Natural killer cell (primary cell): ENCODE measurements at regions of chr3 and their contacts with region 1.

Region 1: GRCh38 chr3:15667484-15667883 is 65.9 kb downstream of the BTD start:
- DNase-seq: peak; percentile 34 to 77
- ATAC-seq: peak; percentile 86 to 98 (median 93)
- H3K4me3 ChIP-seq: no peak overlapping the region
- H3K4me3 Mint-ChIP-seq: peak overlapping the region; percentile 52
- H3K27ac ChIP-seq: no peak overlapping the region
- H3K27ac Mint-ChIP-seq: peak overlapping the region; percentile 69 to 75
- H3K4me1 ChIP-seq: peaks cover 6% of the 10 kb centered on the region
- H3K4me1 Mint-ChIP-seq: peaks cover 15 to 35% of the 10 kb centered on the region in 2 donors
- H3K27me3 ChIP-seq: no peaks in the 10 kb centered on the region
- H3K27me3 Mint-ChIP-seq: no peaks in the 10 kb centered on the region
- CTCF ChIP-seq: no peak

Region 2: GRCh38 chr3:15647611-15648167 is 19.8 kb before region 1 on chr3:
- intact Hi-C with region 1: no loop called
- DNase-seq: peak; percentile 51 to 78
- ATAC-seq: peak; percentile 80 to 87 (median 81)
- H3K4me3 ChIP-seq: no peak overlapping the region
- H3K4me3 Mint-ChIP-seq: peak overlapping the region; percentile 92
- H3K27ac ChIP-seq: peak overlapping the region; percentile 16
- H3K27ac Mint-ChIP-seq: peak overlapping the region; percentile 83 to 94
- H3K4me1 ChIP-seq: peaks cover 51% of the 10 kb centered on the region
- H3K4me1 Mint-ChIP-seq: peaks cover 58 to 63% of the 10 kb centered on the region in 2 donors
- H3K27me3 ChIP-seq: no peaks in the 10 kb centered on the region
- H3K27me3 Mint-ChIP-seq: peaks cover 0 to 20% of the 10 kb centered on the region in 2 donors
- CTCF ChIP-seq: no peak

Region 3: DNA sequence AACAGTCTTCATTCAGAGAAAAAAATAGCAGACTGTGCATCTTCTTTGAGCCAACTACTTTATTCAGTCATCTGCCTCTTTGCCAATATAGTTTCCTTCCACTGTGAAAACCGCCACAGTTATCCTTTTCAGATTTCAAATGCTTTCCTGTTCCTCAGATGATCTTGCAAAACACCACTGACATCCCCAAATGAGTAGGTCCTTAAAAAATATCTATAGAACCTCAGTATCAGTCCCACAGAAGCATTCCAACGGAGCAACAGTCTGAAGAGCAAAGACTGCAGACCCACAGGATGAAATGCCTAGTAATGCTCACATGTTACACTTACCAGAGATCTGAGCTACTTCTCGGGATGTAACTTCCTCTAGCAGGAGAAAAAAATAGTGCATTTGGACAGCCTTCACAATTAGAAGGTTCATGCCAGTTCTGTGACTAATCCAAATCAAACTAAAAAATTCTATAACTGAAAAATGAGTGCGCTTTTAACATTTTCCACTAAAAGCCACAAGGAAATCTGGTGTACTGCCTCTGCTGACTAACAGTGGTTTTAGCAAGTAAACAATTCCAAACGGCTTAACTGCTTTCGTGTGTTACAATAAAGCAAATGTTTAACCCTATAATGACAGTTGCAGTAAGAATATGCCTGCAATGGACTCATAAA is 130.3 kb after region 1 on chr3 and contains the start of gene ANKRD28:
- intact Hi-C with region 1: loop called (anchors 1 kb)
- DNase-seq: peak in 1 of 2 donors; percentile 59
- ATAC-seq: peak; percentile 40 to 51 (median 40)
- H3K4me3 ChIP-seq: peak within 1 kb of the TSS; percentile 28
- H3K4me3 Mint-ChIP-seq: peak within 1 kb of the TSS; percentile 91
- H3K27ac ChIP-seq: peak within 1 kb of the TSS; percentile 92
- H3K27ac Mint-ChIP-seq: peak within 1 kb of the TSS; percentile 91 to 92
- H3K4me1 ChIP-seq: peaks cover 12% of the 10 kb centered on the region
- H3K4me1 Mint-ChIP-seq: peaks cover 74 to 80% of the 10 kb centered on the region in 2 donors
- H3K27me3 ChIP-seq: no peaks in the 10 kb centered on the region
- H3K27me3 Mint-ChIP-seq: no peaks in the 10 kb centered on the region
- CTCF ChIP-seq: peak; percentile 12
- total RNA-seq, gene ANKRD28: 58.0 to 99.7 (median 91.7) TPM